ENCODE measurements at regions of chr6 and their contacts with region 1.

Region 1: GRCh38 chr6:56843573-56844349 is 111.1 kb upstream of the BEND6 start:
- DNase-seq: peak; percentile 87

Region 2: GRCh38 chr6:56637640-56638039 is 206.1 kb before region 1 on chr6:
- intact Hi-C with region 1: loop called (anchors 2 kb)
- DNase-seq: no peak

Region 3: DNA sequence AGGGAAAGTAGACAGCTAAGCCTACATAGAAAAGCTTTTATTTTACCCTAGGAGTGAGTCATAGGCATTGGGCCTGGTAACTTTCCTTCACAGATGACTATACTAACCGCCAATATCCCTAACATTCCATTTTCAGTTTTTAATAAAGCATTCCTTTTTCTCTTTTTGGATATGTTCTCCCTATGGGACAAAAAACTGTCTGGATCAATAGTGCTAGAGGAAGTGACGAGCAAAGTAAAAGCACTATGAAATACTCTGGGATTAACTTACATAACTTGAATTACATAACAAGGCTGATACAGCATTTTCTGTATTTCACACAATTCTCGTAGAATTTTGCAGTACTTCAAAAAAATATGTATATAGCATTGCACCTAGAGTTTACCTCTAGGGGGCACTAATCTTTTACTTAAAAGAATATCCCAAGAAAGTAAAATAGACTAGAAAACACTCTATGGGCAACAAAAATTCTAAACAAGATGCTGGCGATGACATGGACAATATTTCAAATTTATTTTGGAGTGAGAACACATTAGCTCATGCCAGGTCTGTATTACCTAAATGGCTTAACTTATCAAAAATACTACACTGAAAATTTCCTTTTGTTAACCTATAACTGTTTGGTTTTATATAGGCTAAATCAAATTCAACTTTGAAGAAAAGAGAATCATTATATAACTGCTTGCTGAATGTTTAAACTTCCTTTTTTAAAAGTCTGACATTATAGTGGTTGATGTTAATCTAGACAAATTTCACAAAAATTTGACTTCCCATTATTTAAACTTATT is 134.8 kb before region 1 on chr6:
- intact Hi-C with region 1: loop called (anchors 5 kb)
- DNase-seq: no peak

Region 4: DNA sequence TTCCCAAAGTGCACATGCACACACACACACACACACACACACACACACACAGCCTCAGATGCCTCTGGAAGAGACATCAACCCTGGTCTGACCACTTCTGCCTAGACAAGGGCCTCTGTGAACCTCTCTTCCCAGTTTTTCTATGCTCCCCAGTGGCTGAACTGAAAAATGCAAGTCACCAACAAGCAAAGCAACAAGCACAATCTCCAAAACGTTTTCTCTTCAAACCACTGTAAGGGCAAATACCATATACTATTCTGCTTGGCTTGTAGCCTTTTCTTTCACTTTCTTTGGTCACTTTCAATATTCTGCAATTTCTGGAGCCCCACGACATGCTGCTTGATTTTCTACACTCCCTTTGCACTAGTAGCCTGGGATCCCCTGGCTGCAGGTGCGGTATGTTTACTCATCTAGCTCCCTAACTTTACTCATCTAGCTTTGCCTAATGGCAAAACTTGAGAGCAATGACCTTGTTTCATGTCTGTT is 79.6 kb before region 1 on chr6:
- intact Hi-C with region 1: loop called (anchors 1 kb)
- DNase-seq: no peak

Region 5: GRCh38 chr6:56808871-56809359 is 34.8 kb before region 1 on chr6:
- intact Hi-C with region 1: loop called (anchors 5 kb)
- DNase-seq: no peak

Measured in cardiac septum (tissue), 1 donor.